ENCODE measurements at regions of chr12 and their contacts with region 1.

Region 1: GRCh38 chr12:92928962-92929915 is at the start of gene EEA1:
- DNase-seq: peak; percentile 95
- H3K4me3 Mint-ChIP-seq: peak within 1 kb of the TSS; percentile 75
- H3K27ac Mint-ChIP-seq: peak within 1 kb of the TSS; percentile 88
- H3K4me1 Mint-ChIP-seq: peaks cover 26% of the 10 kb centered on the region
- H3K27me3 Mint-ChIP-seq: no peaks in the 10 kb centered on the region
- CTCF ChIP-seq: no peak
- total RNA-seq, gene EEA1: 46.3 and 50.1 TPM in 2 replicates

Region 2: GRCh38 chr12:92845329-92845728 is 83.9 kb before region 1 on chr12:
- CTCF ChIA-PET with region 1: interaction called, 7 read pairs
- POLR2A ChIA-PET with region 1: interaction called, 26 read pairs
- intact Hi-C with region 1: no loop called
- DNase-seq: no peak
- H3K4me3 Mint-ChIP-seq: no peak overlapping the region
- H3K27ac Mint-ChIP-seq: no peak overlapping the region
- H3K4me1 Mint-ChIP-seq: no peaks in the 10 kb centered on the region
- H3K27me3 Mint-ChIP-seq: no peaks in the 10 kb centered on the region
- CTCF ChIP-seq: no peak

Region 3: GRCh38 chr12:92943482-92944250 is 14.4 kb after region 1 on chr12:
- CTCF ChIA-PET with region 1: interaction called, 5 read pairs
- POLR2A ChIA-PET with region 1: interaction called, 60 read pairs
- intact Hi-C with region 1: no loop called
- DNase-seq: peak; percentile 16
- H3K4me3 Mint-ChIP-seq: no peak overlapping the region
- H3K27ac Mint-ChIP-seq: peak overlapping the region; percentile 61
- H3K4me1 Mint-ChIP-seq: peaks cover 15% of the 10 kb centered on the region
- H3K27me3 Mint-ChIP-seq: no peaks in the 10 kb centered on the region
- CTCF ChIP-seq: no peak

Region 4: DNA sequence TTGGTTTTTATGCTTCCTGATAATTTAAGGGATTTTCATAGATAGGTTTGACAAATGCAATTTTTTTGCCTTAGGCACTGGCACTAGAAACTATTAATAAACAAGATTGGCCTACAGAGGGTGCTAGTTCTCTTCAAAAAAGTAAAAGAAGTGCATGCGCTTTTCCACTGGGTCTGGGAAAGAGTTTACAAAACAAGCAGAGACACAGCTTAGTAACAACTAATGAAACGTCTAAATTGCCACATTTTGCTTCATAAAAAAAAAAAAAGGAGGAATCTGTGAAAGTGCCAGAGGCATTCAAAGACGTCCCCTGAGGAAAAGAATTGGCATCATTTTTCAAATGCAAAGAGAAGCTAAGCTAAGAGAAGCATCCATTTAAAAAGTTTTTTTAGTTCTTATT is 58.1 kb after region 1 on chr12:
- CTCF ChIA-PET with region 1: interaction called, 27 read pairs
- POLR2A ChIA-PET with region 1: interaction called, 11 read pairs
- intact Hi-C with region 1: no loop called
- DNase-seq: peak; percentile 77
- H3K4me3 Mint-ChIP-seq: no peak overlapping the region
- H3K27ac Mint-ChIP-seq: no peak overlapping the region
- H3K4me1 Mint-ChIP-seq: peaks cover 5% of the 10 kb centered on the region
- H3K27me3 Mint-ChIP-seq: no peaks in the 10 kb centered on the region
- CTCF ChIP-seq: peak; percentile 61

Region 5: DNA sequence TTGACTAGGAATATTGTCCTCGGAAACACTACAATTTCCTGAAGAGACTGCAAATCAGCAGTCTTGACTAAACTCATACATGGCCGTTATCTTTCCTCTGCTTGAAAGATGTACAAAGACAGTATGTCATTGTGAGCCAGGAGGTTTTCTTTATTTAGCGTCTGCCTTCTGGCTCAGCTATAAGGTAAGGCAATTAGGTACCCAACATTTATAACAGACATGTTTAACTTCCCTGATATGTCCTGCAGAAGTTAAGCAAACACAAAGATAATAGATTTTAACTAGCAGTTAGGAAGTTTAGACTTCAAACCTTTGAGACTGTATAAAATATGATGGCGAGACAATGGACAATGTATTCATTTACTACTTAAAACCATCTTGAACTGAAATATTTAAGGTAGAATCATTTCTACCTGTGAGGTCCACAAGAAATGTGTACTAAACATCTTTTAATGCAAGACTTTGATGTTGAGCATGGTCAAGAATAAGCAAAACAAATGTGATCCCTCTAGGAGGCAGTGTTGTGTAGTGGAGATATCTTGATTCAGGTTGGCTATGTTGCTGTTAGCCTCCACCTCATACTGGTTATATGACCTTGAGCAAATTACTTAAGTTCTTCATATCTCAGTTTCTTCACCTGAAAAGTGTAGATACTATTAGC is 96.0 kb after region 1 on chr12:
- CTCF ChIA-PET with region 1: no interaction called
- POLR2A ChIA-PET with region 1: no interaction called
- intact Hi-C with region 1: no loop called
- DNase-seq: peak; percentile 70
- H3K4me3 Mint-ChIP-seq: no peak overlapping the region
- H3K27ac Mint-ChIP-seq: no peak overlapping the region
- H3K4me1 Mint-ChIP-seq: no peaks in the 10 kb centered on the region
- H3K27me3 Mint-ChIP-seq: no peaks in the 10 kb centered on the region
- CTCF ChIP-seq: peak; percentile 51

Region 6: GRCh38 chr12:93137656-93138612 is 208.7 kb after region 1 on chr12:
- CTCF ChIA-PET with region 1: no interaction called
- POLR2A ChIA-PET with region 1: interaction called, 15 read pairs
- intact Hi-C with region 1: no loop called
- DNase-seq: peak; percentile 96
- H3K4me3 Mint-ChIP-seq: peak overlapping the region; percentile 4
- H3K27ac Mint-ChIP-seq: peak overlapping the region; percentile 78
- H3K4me1 Mint-ChIP-seq: peaks cover 47% of the 10 kb centered on the region
- H3K27me3 Mint-ChIP-seq: no peaks in the 10 kb centered on the region
- CTCF ChIP-seq: no peak

Measured in MCF 10A (cell line).